Activated CD4-positive, alpha-beta T cell treated with anti-CD3 and anti-CD28 coated beads, Interleukin-2, amount 10 ng/mL, durations not matched to agents 7 days and 5 days (primary cell): ENCODE measurements at regions of chr9 and their contacts with region 1.

Region 1: GRCh38 chr9:114529285-114529684 is 24.0 kb upstream of the WHRN start:
- DNase-seq: no peak
- H3K4me3 Mint-ChIP-seq: no peak overlapping the region
- H3K27ac Mint-ChIP-seq: no peak overlapping the region
- H3K4me1 Mint-ChIP-seq: no peaks in the 10 kb centered on the region
- H3K27me3 Mint-ChIP-seq: peaks cover 26% of the 10 kb centered on the region

Region 2: DNA sequence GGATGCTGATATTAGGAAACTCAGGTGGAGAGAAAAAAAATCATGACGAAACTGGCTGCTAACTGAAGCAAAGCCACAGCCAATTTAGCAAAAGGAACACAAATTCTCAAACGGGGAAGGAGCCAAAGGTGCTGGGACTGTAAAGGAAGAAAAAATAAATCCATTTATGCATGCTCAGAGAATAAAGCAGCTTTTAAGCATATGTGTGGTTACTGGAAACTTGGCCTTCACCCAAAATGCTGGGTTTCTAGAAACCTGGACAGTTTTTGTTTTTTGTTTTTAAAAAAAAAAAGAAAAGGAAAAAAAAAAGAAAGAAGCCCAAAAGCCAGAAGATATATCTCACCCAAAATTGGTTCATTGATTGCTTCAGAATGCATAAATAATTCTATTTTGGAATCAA is 32.0 kb before region 1 on chr9:
- CTCF ChIA-PET with region 1: no interaction called
- POLR2A ChIA-PET with region 1: no interaction called
- DNase-seq: no peak
- H3K4me3 Mint-ChIP-seq: no peak overlapping the region
- H3K27ac Mint-ChIP-seq: no peak overlapping the region
- H3K4me1 Mint-ChIP-seq: peaks cover 5% of the 10 kb centered on the region
- H3K27me3 Mint-ChIP-seq: peaks cover 23% of the 10 kb centered on the region

Region 3: GRCh38 chr9:114507726-114508125 is 21.6 kb before region 1 on chr9:
- CTCF ChIA-PET with region 1: no interaction called
- POLR2A ChIA-PET with region 1: no interaction called
- DNase-seq: peak; percentile 35
- H3K4me3 Mint-ChIP-seq: no peak overlapping the region
- H3K27ac Mint-ChIP-seq: no peak overlapping the region
- H3K4me1 Mint-ChIP-seq: peaks cover 10% of the 10 kb centered on the region
- H3K27me3 Mint-ChIP-seq: peaks cover 65% of the 10 kb centered on the region

Region 4: DNA sequence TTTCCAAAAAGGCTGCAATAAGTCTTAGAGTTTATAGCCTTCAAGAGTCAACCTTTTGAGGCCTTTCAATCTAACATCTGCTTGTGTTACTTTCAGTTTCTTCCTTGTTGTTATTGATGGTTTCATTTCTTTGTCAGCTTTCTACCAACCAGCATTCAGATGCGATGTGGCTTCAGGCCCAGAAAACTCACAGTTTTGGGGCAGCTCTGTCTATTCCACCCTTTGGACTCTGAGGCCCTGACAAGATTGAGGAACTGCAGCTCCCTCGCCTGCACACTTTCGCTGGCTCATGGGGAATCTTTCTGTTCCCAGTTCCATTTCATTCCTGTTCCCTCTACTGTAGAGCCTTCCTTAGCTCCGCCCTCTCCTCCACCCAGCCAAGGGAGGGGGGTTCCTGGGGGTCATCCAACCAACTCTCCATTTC is 10.7 kb before region 1 on chr9:
- CTCF ChIA-PET with region 1: interaction called, 10 read pairs
- POLR2A ChIA-PET with region 1: no interaction called
- DNase-seq: no peak
- H3K4me3 Mint-ChIP-seq: no peak overlapping the region
- H3K27ac Mint-ChIP-seq: peak overlapping the region; percentile 37
- H3K4me1 Mint-ChIP-seq: peaks cover 25% of the 10 kb centered on the region
- H3K27me3 Mint-ChIP-seq: peaks cover 27% of the 10 kb centered on the region

Region 5: GRCh38 chr9:114861922-114862605 is 332.8 kb after region 1 on chr9:
- CTCF ChIA-PET with region 1: no interaction called
- POLR2A ChIA-PET with region 1: no interaction called
- DNase-seq: no peak
- H3K4me3 Mint-ChIP-seq: no peak overlapping the region
- H3K27ac Mint-ChIP-seq: no peak overlapping the region
- H3K4me1 Mint-ChIP-seq: peaks cover 7% of the 10 kb centered on the region
- H3K27me3 Mint-ChIP-seq: peaks cover 6% of the 10 kb centered on the region